Activated naive CD4-positive, alpha-beta T cell treated with anti-CD3 and anti-CD28 coated beads for 36 hours (primary cell): ENCODE measurements at regions of chr11 and their contacts with region 1.

Region 1: GRCh38 chr11:125887373-125888324 is at the start of gene HYLS1:
- DNase-seq: peak; percentile 97
- H3K4me3 Mint-ChIP-seq: peak within 1 kb of the TSS; percentile 81
- H3K27ac Mint-ChIP-seq: peak within 1 kb of the TSS; percentile 88
- H3K4me1 Mint-ChIP-seq: peaks cover 35% of the 10 kb centered on the region
- H3K27me3 Mint-ChIP-seq: no peaks in the 10 kb centered on the region
- total RNA-seq, gene HYLS1: 10.2 to 11.7 TPM

Region 2: GRCh38 chr11:124953753-124954589 is 933.7 kb before region 1 on chr11 and contains the start of gene CCDC15:
- CTCF ChIA-PET with region 1: no interaction called
- intact Hi-C with region 1: loop called (anchors 5 kb)
- DNase-seq: peak; percentile 97
- H3K4me3 Mint-ChIP-seq: no peak within 1 kb of the TSS
- H3K27ac Mint-ChIP-seq: no peak within 1 kb of the TSS
- H3K4me1 Mint-ChIP-seq: peaks cover 7% of the 10 kb centered on the region
- H3K27me3 Mint-ChIP-seq: no peaks in the 10 kb centered on the region
- total RNA-seq, gene CCDC15: 6.1 to 7.3 TPM

Region 3: DNA sequence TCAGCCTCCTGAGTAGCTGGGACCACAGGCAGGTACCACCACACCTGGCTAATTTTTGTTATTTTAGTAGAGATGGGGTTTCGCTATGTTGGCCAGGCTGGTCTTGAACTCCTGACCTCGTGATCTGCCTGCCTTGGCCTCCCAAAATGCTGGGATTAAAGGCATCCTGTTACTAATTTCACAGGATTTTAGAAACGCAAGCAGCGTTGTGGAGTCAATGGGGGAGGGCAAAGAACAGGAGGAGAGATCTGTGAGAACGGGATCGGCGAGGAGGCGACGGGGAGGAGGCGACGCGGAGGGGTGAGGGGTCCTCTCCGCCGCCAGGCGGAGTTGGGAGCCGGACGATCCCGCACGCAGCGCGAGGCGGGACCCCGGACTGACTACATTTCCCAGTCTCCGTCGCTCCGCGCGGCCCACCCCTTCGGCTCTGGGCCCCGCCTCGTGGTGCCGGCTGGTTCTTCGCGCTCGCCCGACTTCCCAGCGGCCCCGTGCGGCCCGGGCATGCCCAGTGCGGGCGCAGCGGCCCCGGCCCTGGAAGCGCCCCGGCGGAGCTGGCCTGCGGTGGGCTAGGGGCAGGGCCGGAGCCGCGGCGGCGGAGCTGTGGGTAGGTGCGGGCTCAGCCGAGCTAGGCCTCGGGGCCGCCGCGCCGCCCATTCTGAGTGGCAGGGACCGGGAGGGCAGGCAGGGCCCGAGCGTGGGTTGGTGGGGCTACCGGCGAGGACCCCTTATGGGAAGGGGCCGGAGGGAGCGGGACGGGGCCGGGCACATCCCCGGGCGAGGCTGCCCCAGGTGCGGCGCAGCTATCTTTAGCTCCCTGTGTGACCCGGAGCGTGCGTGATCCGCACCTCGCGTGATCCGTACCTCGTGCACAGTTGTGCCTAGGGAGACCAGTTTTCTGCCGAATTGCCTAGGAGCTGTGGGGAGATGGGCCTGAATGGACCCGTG is 318.4 kb before region 1 on chr11 and contains the start of gene EI24:
- CTCF ChIA-PET with region 1: interaction called, 4 read pairs
- intact Hi-C with region 1: loop called (anchors 1 kb)
- DNase-seq: peak; percentile 91
- H3K4me3 Mint-ChIP-seq: peak within 1 kb of the TSS; percentile 94
- H3K27ac Mint-ChIP-seq: peak within 1 kb of the TSS; percentile 92
- H3K4me1 Mint-ChIP-seq: peaks cover 32% of the 10 kb centered on the region
- H3K27me3 Mint-ChIP-seq: no peaks in the 10 kb centered on the region
- total RNA-seq, gene EI24: 28.8 to 33.0 TPM

Region 4: GRCh38 chr11:125625630-125626287 is 261.9 kb before region 1 on chr11:
- CTCF ChIA-PET with region 1: interaction called, 5 read pairs
- intact Hi-C with region 1: loop called (anchors 1 kb)
- DNase-seq: peak; percentile 90
- H3K4me3 Mint-ChIP-seq: peak overlapping the region; percentile 89
- H3K27ac Mint-ChIP-seq: peak overlapping the region; percentile 99
- H3K4me1 Mint-ChIP-seq: peaks cover 21% of the 10 kb centered on the region
- H3K27me3 Mint-ChIP-seq: no peaks in the 10 kb centered on the region

Region 5: DNA sequence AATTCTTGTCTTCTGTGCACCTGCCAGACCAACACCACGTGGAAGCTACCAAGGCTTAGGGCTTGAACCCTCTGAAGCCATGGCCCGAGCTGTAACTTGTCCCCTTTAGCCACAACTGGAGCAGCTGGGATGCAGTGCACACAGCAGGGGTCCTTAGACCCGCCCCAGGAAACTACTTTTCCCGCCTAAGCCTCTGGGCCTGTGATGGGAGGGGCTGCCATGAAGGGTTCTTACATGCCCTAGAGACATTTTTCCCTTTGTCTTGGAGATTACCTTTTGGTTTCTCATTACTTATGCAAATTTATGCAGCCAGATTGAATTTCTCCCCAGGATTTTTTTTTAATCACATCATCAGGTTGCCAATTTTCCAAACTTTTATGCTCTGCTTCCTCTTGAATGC is 90.0 kb before region 1 on chr11:
- CTCF ChIA-PET with region 1: no interaction called
- intact Hi-C with region 1: no loop called
- DNase-seq: no peak
- H3K4me3 Mint-ChIP-seq: no peak overlapping the region
- H3K27ac Mint-ChIP-seq: no peak overlapping the region
- H3K4me1 Mint-ChIP-seq: no peaks in the 10 kb centered on the region
- H3K27me3 Mint-ChIP-seq: peaks cover 10% of the 10 kb centered on the region

Region 6: GRCh38 chr11:126062679-126063506 is 175.2 kb after region 1 on chr11 and contains the start of gene CDON:
- CTCF ChIA-PET with region 1: no interaction called
- intact Hi-C with region 1: loop called (anchors 1 kb)
- DNase-seq: peak; percentile 92
- H3K4me3 Mint-ChIP-seq: peak within 1 kb of the TSS; percentile 77
- H3K27ac Mint-ChIP-seq: peak within 1 kb of the TSS; percentile 92
- H3K4me1 Mint-ChIP-seq: peaks cover 5% of the 10 kb centered on the region
- H3K27me3 Mint-ChIP-seq: peaks cover 17% of the 10 kb centered on the region
- total RNA-seq, gene CDON: 2.6 to 3.5 TPM